B cell (primary cell): ENCODE measurements at regions of chr10 and their contacts with region 1.

Region 1: DNA sequence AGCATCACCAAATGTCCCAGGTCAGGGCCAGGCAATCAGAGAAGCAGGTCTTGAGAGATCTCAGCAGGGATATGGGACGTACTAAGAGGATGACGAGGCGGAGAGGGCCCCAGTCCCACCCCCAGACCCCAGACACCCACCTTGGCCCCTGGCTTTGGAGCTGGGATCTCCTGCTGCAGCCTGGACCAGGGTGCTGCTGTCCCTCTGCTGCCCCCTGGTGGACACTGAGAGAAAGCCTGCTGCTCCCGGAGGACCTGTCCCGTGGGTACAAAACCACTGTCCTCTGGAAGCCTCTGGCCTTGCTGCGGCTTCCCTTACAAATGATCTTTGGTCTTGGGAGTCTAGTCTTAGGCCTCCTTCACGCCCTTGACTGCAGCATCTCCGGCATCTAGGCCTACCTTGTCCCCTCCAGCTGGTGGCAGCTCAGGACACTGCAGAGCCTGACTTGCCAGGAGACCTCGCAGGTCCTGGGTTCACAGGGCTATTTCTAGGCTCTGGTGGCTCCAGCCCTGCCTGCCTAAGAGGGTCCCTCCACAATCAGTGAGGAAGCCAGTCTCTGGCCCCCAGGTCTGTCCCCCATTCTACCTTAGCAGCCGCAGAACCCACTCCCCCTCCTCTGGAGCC is 97.1 kb downstream of the RGS10 start:
- DNase-seq: peak; percentile 86
- ATAC-seq: peak; percentile 75
- H3K4me3 ChIP-seq: no peak overlapping the region
- H3K4me3 Mint-ChIP-seq: no peak overlapping the region
- H3K27ac ChIP-seq: no peak overlapping the region
- H3K27ac Mint-ChIP-seq: peak overlapping the region; percentile 61
- H3K4me1 ChIP-seq: peaks cover 17 to 29% of the 10 kb centered on the region in 2 donors
- H3K4me1 Mint-ChIP-seq: peaks cover 35% of the 10 kb centered on the region
- H3K27me3 ChIP-seq: no peaks in the 10 kb centered on the region
- H3K27me3 Mint-ChIP-seq: no peaks in the 10 kb centered on the region
- CTCF ChIP-seq: peak; percentile 93

Region 2: GRCh38 chr10:119199231-119199992 is 246.0 kb before region 1 on chr10:
- CTCF ChIA-PET with region 1: interaction called, 144 read pairs
- POLR2A ChIA-PET with region 1: interaction called, 3 read pairs
- intact Hi-C with region 1: loop called (anchors 2 kb)
- DNase-seq: peak; percentile 68
- ATAC-seq: peak; percentile 84
- H3K4me3 ChIP-seq: no peak overlapping the region
- H3K4me3 Mint-ChIP-seq: no peak overlapping the region
- H3K27ac ChIP-seq: no peak overlapping the region
- H3K27ac Mint-ChIP-seq: no peak overlapping the region
- H3K4me1 ChIP-seq: peaks cover 0 to 3% of the 10 kb centered on the region in 2 donors
- H3K4me1 Mint-ChIP-seq: peaks cover 4% of the 10 kb centered on the region
- H3K27me3 ChIP-seq: peaks cover 0 to 8% (median 6%) of the 10 kb centered on the region in 4 experiments
- H3K27me3 Mint-ChIP-seq: peaks cover 9% of the 10 kb centered on the region
- CTCF ChIP-seq: peak; percentile 52

Region 3: DNA sequence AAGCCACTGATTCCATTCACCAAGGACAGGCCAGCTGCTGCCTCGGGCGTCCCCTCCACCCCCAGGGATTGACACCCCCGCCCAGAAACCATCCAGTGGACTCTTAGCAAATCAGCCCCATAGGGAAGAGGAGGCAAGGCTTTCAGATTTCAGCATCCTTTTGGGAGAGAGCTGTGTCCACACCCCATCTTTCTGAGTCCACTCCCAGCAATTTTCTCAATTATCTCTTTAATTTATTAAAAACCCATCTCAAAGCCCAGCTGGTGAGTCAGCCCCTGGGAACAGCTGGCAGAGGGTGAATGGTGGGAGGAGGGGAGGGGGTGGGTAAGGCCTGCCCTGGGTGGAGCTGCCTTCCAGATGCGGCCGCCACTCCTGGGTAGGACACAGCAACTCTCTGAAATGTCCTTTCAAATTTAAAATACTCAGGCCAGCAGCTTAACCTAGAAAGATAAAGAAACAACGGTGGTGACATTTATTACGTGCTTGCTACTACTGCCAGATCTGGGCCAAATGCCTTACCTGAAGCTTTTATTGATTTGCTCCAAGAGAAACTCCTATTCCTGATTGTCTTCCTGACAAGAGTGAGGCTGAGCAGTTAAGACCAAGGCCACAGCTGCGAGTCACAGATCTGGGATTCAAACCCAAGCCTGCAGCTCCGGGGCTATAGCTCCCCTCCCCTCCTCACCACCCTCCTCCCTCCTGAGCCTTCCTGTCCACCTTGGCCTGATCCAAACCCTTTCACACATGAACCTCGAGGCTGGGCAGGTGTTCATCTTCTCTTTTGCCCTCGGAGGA is 23.3 kb before region 1 on chr10:
- CTCF ChIA-PET with region 1: interaction called, 14 read pairs
- POLR2A ChIA-PET with region 1: no interaction called
- intact Hi-C with region 1: loop called (anchors 2 kb)
- DNase-seq: no peak
- ATAC-seq: no peak
- H3K4me3 ChIP-seq: no peak overlapping the region
- H3K4me3 Mint-ChIP-seq: no peak overlapping the region
- H3K27ac ChIP-seq: no peak overlapping the region
- H3K27ac Mint-ChIP-seq: no peak overlapping the region
- H3K4me1 ChIP-seq: peaks cover 0 to 4% of the 10 kb centered on the region in 2 donors
- H3K4me1 Mint-ChIP-seq: peaks cover 2% of the 10 kb centered on the region
- H3K27me3 ChIP-seq: no peaks in the 10 kb centered on the region
- H3K27me3 Mint-ChIP-seq: no peaks in the 10 kb centered on the region
- CTCF ChIP-seq: no peak

Region 4: GRCh38 chr10:119461380-119461779 is 16.0 kb after region 1 on chr10:
- CTCF ChIA-PET with region 1: interaction called, 14 read pairs
- POLR2A ChIA-PET with region 1: no interaction called
- intact Hi-C with region 1: no loop called
- DNase-seq: no peak
- ATAC-seq: peak; percentile 63
- H3K4me3 ChIP-seq: no peak overlapping the region
- H3K4me3 Mint-ChIP-seq: no peak overlapping the region
- H3K27ac ChIP-seq: no peak overlapping the region
- H3K27ac Mint-ChIP-seq: peak overlapping the region; percentile 27
- H3K4me1 ChIP-seq: peaks cover 0 to 20% of the 10 kb centered on the region in 2 donors
- H3K4me1 Mint-ChIP-seq: peaks cover 23% of the 10 kb centered on the region
- H3K27me3 ChIP-seq: peaks cover 0 to 2% (median 0%) of the 10 kb centered on the region in 4 experiments
- H3K27me3 Mint-ChIP-seq: peaks cover 2% of the 10 kb centered on the region
- CTCF ChIP-seq: no peak

Region 5: DNA sequence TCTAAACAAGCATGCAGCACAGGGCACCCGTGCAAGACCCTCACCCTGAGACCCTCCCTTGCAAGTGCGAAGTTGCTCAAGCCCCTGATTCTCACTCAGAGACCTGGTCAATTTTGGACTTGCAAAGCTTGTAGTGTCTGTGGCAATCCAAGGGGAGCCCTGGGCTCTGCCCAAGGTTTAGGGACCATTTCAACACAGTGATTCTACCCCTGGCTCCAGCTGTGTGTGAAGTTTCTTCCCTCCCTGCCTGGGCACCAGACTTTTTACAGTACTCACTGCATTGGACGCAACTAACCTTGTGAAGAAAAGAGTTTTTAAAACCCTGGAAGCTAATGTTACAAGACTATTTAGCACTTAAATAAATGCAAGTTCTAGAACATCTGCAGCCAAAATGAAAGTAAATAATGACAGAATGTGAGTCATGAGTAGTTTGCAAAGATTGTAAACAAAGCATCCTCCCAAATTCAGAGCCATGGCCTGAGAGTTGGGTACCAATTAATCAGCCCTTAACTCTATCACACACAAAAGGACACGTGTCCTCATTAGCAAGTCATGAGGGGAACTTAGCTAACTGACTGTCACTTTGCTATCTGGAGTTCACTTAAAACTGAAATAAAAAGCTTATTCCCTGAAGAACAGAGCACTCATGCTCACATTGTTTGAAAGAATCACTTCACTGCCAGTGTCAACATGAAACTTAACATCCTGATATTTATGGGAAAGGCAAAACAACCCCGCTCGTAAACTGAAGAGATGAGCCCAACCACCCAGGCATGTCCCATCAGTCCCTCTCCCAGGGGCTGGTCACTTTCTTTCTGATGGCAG is 49.0 kb after region 1 on chr10:
- CTCF ChIA-PET with region 1: interaction called, 81 read pairs
- POLR2A ChIA-PET with region 1: interaction called, 7 read pairs
- intact Hi-C with region 1: loop called (anchors 1 kb)
- DNase-seq: no peak
- ATAC-seq: no peak
- H3K4me3 ChIP-seq: no peak overlapping the region
- H3K4me3 Mint-ChIP-seq: no peak overlapping the region
- H3K27ac ChIP-seq: no peak overlapping the region
- H3K27ac Mint-ChIP-seq: peak overlapping the region; percentile 53
- H3K4me1 ChIP-seq: peaks cover 3 to 8% of the 10 kb centered on the region in 2 donors
- H3K4me1 Mint-ChIP-seq: peaks cover 13% of the 10 kb centered on the region
- H3K27me3 ChIP-seq: no peaks in the 10 kb centered on the region
- H3K27me3 Mint-ChIP-seq: no peaks in the 10 kb centered on the region
- CTCF ChIP-seq: no peak

Region 6: GRCh38 chr10:119859420-119860258 is 414.2 kb after region 1 on chr10:
- CTCF ChIA-PET with region 1: no interaction called
- POLR2A ChIA-PET with region 1: no interaction called
- intact Hi-C with region 1: loop called (anchors 2 kb)
- DNase-seq: peak; percentile 71
- ATAC-seq: peak; percentile 58
- H3K4me3 ChIP-seq: no peak overlapping the region
- H3K4me3 Mint-ChIP-seq: no peak overlapping the region
- H3K27ac ChIP-seq: peak overlapping the region in 1 of 2 donors; percentile 47
- H3K27ac Mint-ChIP-seq: no peak overlapping the region
- H3K4me1 ChIP-seq: peaks cover 3 to 7% of the 10 kb centered on the region in 2 donors
- H3K4me1 Mint-ChIP-seq: peaks cover 26% of the 10 kb centered on the region
- H3K27me3 ChIP-seq: no peaks in the 10 kb centered on the region
- H3K27me3 Mint-ChIP-seq: no peaks in the 10 kb centered on the region
- CTCF ChIP-seq: peak; percentile 83

Region 7: GRCh38 chr10:119957451-119957850 is 512.0 kb after region 1 on chr10:
- CTCF ChIA-PET with region 1: no interaction called
- POLR2A ChIA-PET with region 1: no interaction called
- intact Hi-C with region 1: no loop called
- DNase-seq: no peak
- ATAC-seq: no peak
- H3K4me3 ChIP-seq: no peak overlapping the region
- H3K4me3 Mint-ChIP-seq: no peak overlapping the region
- H3K27ac ChIP-seq: no peak overlapping the region
- H3K27ac Mint-ChIP-seq: no peak overlapping the region
- H3K4me1 ChIP-seq: no peaks in the 10 kb centered on the region
- H3K4me1 Mint-ChIP-seq: no peaks in the 10 kb centered on the region
- H3K27me3 ChIP-seq: no peaks in the 10 kb centered on the region
- H3K27me3 Mint-ChIP-seq: no peaks in the 10 kb centered on the region
- CTCF ChIP-seq: no peak